ENCODE measurements at regions of chr6 and their contacts with region 1.

Region 1: DNA sequence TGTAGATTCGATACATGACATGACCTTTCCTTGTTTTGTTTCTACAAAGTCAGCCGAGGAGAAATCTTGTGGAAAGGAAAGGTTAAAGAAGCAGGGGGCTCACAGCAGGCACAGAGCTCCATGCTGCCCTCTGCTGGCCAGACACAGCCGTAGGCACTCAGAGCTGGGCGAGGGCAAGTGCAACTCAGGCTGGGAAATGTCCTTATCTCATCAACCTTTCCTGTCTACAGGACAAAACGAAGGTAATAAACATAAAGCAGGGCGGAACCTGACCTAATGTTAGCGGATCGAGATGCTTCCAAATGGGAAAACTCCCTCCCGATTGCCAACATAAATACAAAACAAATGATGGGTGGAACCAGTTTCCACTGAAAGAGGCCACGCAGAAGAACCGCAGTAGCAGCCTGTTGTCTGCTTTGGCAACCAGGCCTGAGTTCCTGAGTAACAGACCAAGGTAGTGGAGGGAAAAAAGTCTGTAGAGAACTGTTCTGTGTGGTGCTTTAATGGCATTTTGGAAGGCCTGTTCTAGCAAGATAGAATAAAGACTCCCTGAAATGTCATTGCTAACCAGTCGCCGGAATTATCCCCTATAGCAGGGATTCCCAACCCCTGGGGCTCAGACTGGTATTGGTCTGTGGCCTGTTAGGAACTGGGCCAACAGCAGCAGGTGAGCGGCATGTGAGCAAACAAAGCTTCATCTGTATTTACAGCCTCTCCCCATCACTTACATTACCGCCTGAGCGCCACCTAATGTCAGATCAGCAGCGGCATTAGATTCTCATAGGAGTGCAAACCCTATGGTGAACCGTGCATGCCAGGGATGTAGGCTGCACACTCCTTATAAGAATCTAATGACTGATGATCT is 85.2 kb downstream of the MBOAT1 start:
- DNase-seq: peak; percentile 61
- H3K4me3 Mint-ChIP-seq: no peak overlapping the region
- H3K27ac Mint-ChIP-seq: no peak overlapping the region
- H3K4me1 Mint-ChIP-seq: peaks cover 7% of the 10 kb centered on the region
- H3K27me3 Mint-ChIP-seq: no peaks in the 10 kb centered on the region
- CTCF ChIP-seq: peak; percentile 89

Region 2: DNA sequence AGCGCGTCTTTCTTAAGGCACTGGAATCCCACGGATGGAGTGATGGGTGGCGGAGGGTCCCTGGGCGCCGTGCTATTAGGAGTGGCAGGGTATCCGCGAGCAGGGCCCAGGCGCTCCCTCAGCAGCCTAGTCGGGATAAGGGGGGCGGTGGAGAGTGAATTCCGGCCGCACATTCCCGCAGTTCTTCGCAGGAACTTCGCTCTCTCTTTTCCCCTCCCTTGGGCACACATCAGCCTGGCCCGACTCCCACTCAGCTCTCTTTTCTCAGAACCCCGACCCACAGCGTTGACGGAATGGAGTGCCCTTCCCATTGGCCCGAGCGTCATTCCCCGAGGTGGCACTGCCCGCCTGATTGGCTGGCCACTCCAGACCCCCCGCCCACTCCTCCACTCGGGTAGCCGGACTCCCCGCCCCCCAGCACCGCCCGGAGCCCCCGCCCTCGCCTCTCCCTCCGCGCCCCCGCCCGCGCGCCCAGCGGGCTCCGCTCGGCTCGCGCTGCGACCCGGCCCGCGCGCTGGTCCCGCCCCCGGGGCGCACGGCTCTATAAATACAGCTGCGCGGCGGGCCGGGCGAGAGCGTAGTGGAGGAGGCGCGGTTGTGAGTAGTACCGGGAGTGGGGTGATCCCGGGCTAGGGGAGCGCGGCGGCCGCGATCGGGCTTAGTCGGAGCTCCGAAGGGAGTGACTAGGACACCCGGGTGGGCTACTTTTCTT is 290.1 kb before region 1 on chr6 and contains the start of gene ID4:
- CTCF ChIA-PET with region 1: no interaction called
- POLR2A ChIA-PET with region 1: no interaction called
- intact Hi-C with region 1: no loop called
- DNase-seq: no peak
- H3K4me3 Mint-ChIP-seq: peak within 1 kb of the TSS; percentile 57
- H3K27ac Mint-ChIP-seq: no peak within 1 kb of the TSS
- H3K4me1 Mint-ChIP-seq: peaks cover 6% of the 10 kb centered on the region
- H3K27me3 Mint-ChIP-seq: peaks cover 75% of the 10 kb centered on the region
- CTCF ChIP-seq: no peak
- total RNA-seq, gene ID4: not detected in 2 replicates

Region 3: GRCh38 chr6:20109526-20109925 is 17.5 kb before region 1 on chr6:
- CTCF ChIA-PET with region 1: interaction called, 38 read pairs
- POLR2A ChIA-PET with region 1: no interaction called
- intact Hi-C with region 1: no loop called
- DNase-seq: no peak
- H3K4me3 Mint-ChIP-seq: no peak overlapping the region
- H3K27ac Mint-ChIP-seq: no peak overlapping the region
- H3K4me1 Mint-ChIP-seq: no peaks in the 10 kb centered on the region
- H3K27me3 Mint-ChIP-seq: no peaks in the 10 kb centered on the region
- CTCF ChIP-seq: no peak

Region 4: GRCh38 chr6:20183030-20183437 is 56.0 kb after region 1 on chr6:
- CTCF ChIA-PET with region 1: interaction called, 11 read pairs
- POLR2A ChIA-PET with region 1: no interaction called
- intact Hi-C with region 1: no loop called
- DNase-seq: peak; percentile 81
- H3K4me3 Mint-ChIP-seq: no peak overlapping the region
- H3K27ac Mint-ChIP-seq: peak overlapping the region; percentile 42
- H3K4me1 Mint-ChIP-seq: peaks cover 18% of the 10 kb centered on the region
- H3K27me3 Mint-ChIP-seq: no peaks in the 10 kb centered on the region
- CTCF ChIP-seq: no peak

Region 5: DNA sequence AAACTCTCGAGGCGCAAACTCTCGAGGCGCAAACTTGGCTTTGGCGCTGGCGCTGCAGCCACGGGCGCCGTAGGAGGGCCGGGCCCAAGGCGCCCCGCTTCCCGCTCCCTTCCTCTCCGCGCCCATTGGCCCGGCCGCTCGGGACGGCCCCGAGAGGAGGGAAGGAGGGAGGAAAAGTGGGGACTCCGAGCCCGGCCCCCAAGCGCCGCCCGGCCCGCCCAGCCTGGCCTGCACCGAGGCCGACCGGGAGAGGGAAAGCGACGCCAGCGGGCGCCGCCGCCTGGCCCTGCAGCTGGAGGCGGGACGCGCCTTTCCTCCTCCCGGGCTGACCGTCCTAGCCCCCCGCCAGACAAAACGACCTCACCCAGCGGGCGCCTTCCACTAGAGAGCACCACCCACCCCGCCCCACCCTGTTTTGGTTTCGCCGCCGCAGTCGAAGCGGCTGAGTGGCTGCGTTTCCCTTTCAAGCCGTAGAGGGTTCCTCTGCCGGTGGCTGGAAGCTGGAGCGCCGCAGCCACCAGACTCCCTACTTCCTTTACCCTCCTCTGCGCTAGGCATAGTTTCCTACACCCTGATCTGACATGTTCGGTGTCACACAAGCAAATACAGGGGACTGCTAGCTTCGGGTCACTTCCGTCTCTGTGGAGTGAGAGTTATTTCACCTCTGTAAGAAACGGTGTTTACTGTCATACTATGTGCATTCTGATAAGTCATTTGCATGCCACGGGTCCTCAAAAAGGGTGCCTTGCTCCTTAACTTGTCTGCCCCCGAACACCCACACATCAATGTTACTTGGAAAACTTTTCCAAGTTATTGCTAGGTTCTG is 85.6 kb after region 1 on chr6 and contains the start of gene MBOAT1:
- CTCF ChIA-PET with region 1: interaction called, 6 read pairs
- POLR2A ChIA-PET with region 1: no interaction called
- intact Hi-C with region 1: loop called (anchors 5 kb)
- DNase-seq: peak; percentile 94
- H3K4me3 Mint-ChIP-seq: peak within 1 kb of the TSS; percentile 86
- H3K27ac Mint-ChIP-seq: peak within 1 kb of the TSS; percentile 78
- H3K4me1 Mint-ChIP-seq: peaks cover 12% of the 10 kb centered on the region
- H3K27me3 Mint-ChIP-seq: no peaks in the 10 kb centered on the region
- CTCF ChIP-seq: no peak
- total RNA-seq, gene MBOAT1: 6.3 and 9.3 TPM in 2 replicates

Measured in MCF 10A (cell line).